ENCODE measurements at regions of chr19 and their contacts with region 1.

Region 1: DNA sequence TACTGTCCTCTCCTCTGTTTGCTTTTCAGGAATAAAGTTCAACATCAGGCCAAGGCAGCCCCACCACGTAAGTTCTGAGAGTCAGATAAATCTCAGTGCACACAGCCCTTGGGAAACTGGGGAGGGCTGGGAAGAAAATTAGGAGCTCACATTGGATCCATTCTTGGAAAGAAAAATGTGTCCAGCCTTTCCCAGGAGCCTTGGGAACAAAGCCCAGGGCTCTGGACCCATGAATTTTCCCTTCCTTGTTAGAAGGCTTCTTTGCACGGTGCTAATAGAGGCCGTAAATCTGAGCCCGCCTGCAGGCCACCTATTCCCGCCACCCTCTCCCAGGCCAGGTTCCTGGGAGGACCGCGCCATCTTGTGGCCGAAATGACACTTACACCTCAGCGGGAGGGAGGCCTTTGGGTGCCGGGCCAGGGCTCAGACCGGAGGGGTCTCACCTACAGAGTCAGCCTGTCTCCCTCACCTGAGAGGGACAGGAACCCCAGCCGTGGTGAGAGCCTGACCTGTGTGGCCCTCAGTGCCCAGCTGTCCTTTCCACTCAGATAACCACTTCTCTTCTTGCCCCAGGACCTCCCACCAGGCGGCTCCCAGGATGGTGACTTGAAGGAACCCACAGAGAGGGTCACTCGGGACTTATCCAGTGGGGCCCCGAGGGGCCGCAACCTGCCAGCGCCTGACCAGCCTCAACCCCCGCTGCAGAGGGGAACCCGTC is 25.1 kb upstream of the KCTD15 start:
- DNase-seq: peak; percentile 75
- H3K4me3 Mint-ChIP-seq: no peak overlapping the region
- H3K27ac Mint-ChIP-seq: no peak overlapping the region
- H3K4me1 Mint-ChIP-seq: no peaks in the 10 kb centered on the region
- H3K27me3 Mint-ChIP-seq: peaks cover 21% of the 10 kb centered on the region
- CTCF ChIP-seq: peak; percentile 83

Region 2: GRCh38 chr19:33235269-33235995 is 536.1 kb before region 1 on chr19:
- CTCF ChIA-PET with region 1: interaction called, 5 read pairs
- POLR2A ChIA-PET with region 1: no interaction called
- intact Hi-C with region 1: loop called (anchors 1 kb)
- DNase-seq: peak; percentile 80
- H3K4me3 Mint-ChIP-seq: no peak overlapping the region
- H3K27ac Mint-ChIP-seq: no peak overlapping the region
- H3K4me1 Mint-ChIP-seq: no peaks in the 10 kb centered on the region
- H3K27me3 Mint-ChIP-seq: no peaks in the 10 kb centered on the region
- CTCF ChIP-seq: peak; percentile 86

Region 3: DNA sequence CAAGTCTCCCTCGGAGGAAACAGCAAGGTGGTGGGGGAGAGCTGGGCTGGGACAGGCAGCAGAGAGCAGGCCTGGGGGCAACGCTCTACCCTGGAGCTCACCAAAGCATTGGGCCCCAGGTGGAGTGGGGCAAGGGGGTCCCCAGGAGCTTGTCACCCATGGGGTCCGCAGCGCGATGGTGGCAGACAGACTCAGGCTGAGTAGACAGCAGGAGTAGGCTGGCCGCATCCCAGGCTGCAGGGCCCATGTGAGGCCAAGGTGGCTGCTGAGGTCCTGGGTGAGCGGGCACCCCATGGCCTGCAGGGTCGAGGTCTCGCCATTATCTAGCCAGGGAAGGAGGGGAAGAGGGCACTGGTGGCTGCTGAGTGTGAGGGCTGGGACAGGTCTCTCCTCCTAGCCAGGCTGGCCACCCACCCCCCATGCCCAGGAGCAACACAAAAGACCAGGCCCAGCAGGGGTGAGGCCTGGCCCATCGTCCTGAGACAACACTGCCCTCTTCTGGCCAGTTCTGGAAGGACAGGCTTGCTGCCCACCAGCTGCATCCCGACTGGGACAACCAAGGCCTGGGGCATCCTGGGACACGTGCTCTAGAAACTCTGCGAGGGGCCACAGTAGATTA is 364.9 kb before region 1 on chr19:
- CTCF ChIA-PET with region 1: interaction called, 14 read pairs
- POLR2A ChIA-PET with region 1: no interaction called
- intact Hi-C with region 1: no loop called
- DNase-seq: peak; percentile 73
- H3K4me3 Mint-ChIP-seq: no peak overlapping the region
- H3K27ac Mint-ChIP-seq: no peak overlapping the region
- H3K4me1 Mint-ChIP-seq: no peaks in the 10 kb centered on the region
- H3K27me3 Mint-ChIP-seq: no peaks in the 10 kb centered on the region
- CTCF ChIP-seq: peak; percentile 95

Region 4: GRCh38 chr19:33430674-33431277 is 340.8 kb before region 1 on chr19:
- CTCF ChIA-PET with region 1: interaction called, 227 read pairs
- POLR2A ChIA-PET with region 1: no interaction called
- intact Hi-C with region 1: loop called (anchors 1 kb)
- DNase-seq: peak; percentile 72
- H3K4me3 Mint-ChIP-seq: no peak overlapping the region
- H3K27ac Mint-ChIP-seq: no peak overlapping the region
- H3K4me1 Mint-ChIP-seq: peaks cover 5% of the 10 kb centered on the region
- H3K27me3 Mint-ChIP-seq: peaks cover 12% of the 10 kb centered on the region
- CTCF ChIP-seq: peak; percentile 74

Region 5: DNA sequence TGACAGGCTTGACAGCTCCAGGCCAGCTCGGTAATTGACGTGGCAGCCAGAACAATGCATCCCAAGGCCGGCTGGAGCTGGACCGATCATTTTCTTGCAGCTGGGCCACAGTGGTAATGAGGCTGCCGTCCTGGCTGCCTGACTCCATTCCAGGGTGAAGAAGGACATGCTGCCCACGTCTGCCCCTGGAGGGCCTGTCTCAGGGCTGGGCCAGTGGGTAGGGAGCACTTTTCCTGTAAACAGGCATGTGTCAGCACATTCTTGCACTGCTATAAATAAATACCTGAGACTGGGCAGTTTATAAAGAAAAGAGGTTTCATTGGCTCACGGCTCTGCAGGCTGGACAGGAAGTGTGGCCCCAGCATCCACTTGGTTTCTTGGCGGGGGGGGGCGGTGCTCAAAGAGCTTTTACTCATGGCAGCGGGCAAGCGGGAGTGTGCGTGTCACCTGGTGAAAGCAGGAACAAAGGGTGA is 13.0 kb before region 1 on chr19:
- CTCF ChIA-PET with region 1: interaction called, 28 read pairs
- POLR2A ChIA-PET with region 1: no interaction called
- intact Hi-C with region 1: no loop called
- DNase-seq: peak; percentile 10
- H3K4me3 Mint-ChIP-seq: no peak overlapping the region
- H3K27ac Mint-ChIP-seq: no peak overlapping the region
- H3K4me1 Mint-ChIP-seq: no peaks in the 10 kb centered on the region
- H3K27me3 Mint-ChIP-seq: no peaks in the 10 kb centered on the region
- CTCF ChIP-seq: no peak

Region 6: GRCh38 chr19:33938812-33939211 is 167.3 kb after region 1 on chr19:
- CTCF ChIA-PET with region 1: no interaction called
- POLR2A ChIA-PET with region 1: no interaction called
- intact Hi-C with region 1: no loop called
- DNase-seq: no peak
- H3K4me3 Mint-ChIP-seq: no peak overlapping the region
- H3K27ac Mint-ChIP-seq: no peak overlapping the region
- H3K4me1 Mint-ChIP-seq: no peaks in the 10 kb centered on the region
- H3K27me3 Mint-ChIP-seq: no peaks in the 10 kb centered on the region
- CTCF ChIP-seq: no peak

Region 7: GRCh38 chr19:33998739-33999345 is 227.3 kb after region 1 on chr19:
- CTCF ChIA-PET with region 1: interaction called, 75 read pairs
- POLR2A ChIA-PET with region 1: no interaction called
- intact Hi-C with region 1: no loop called
- DNase-seq: peak; percentile 5
- H3K4me3 Mint-ChIP-seq: no peak overlapping the region
- H3K27ac Mint-ChIP-seq: no peak overlapping the region
- H3K4me1 Mint-ChIP-seq: no peaks in the 10 kb centered on the region
- H3K27me3 Mint-ChIP-seq: peaks cover 19% of the 10 kb centered on the region
- CTCF ChIP-seq: peak; percentile 28